OCI-LY7 (cell line): ENCODE measurements at regions of chr3 and their contacts with region 1.

Region 1: GRCh38 chr3:53170325-53171063 is 9.5 kb downstream of the PRKCD start:
- DNase-seq: peak; percentile 67
- H3K4me3 ChIP-seq: peak overlapping the region; percentile 53
- H3K27ac ChIP-seq: peak overlapping the region; percentile 94
- H3K4me1 ChIP-seq: peaks cover 100% of the 10 kb centered on the region
- CTCF ChIP-seq: no peak

Region 2: DNA sequence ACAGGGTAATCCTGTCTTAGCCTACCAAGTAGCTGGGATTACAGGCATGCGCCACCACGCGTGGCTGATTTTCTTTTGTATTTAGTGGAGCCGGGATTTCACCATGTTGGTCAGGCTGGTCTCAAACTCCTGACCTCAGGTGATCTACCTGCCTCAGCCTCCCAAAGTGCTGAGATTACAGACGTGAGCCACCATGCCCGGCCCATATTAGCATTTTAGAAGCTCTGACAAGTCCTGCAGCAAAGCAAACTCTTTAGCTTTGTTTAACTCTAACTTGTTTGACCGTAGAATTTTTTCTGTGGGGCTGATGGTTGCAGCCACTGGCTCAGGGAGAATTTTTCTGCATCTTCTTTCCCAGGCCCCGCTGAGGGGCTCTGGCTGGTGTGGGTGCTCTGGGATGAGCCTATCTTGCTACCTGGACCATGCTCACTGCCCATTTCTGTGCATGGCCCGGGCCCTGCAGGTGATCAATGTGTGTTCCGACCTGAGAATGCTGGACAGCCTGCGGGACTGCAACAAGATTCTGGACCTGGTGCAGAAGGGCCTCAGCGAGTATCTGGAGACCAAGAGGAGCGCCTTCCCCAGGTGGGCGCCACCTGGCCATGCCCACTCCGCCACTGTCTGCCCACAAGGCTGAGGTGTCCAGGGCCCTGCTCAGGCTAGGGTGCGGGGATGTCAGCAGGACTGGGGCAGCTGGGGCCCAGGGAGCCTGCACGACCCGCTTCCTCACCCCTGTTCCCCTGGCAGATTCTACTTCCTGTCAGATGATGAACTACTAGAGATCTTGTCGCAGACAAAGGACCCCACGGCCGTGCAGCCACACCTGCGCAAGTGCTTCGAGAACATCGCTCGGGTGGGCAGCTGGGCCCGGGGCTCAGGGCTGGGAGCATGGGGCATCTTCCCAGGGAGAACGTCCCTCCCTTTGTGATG is 813.1 kb before region 1 on chr3:
- CTCF ChIA-PET with region 1: no interaction called
- POLR2A ChIA-PET with region 1: no interaction called
- intact Hi-C with region 1: no loop called
- DNase-seq: no peak
- H3K4me3 ChIP-seq: no peak overlapping the region
- H3K27ac ChIP-seq: no peak overlapping the region
- H3K4me1 ChIP-seq: no peaks in the 10 kb centered on the region
- CTCF ChIP-seq: no peak

Region 3: DNA sequence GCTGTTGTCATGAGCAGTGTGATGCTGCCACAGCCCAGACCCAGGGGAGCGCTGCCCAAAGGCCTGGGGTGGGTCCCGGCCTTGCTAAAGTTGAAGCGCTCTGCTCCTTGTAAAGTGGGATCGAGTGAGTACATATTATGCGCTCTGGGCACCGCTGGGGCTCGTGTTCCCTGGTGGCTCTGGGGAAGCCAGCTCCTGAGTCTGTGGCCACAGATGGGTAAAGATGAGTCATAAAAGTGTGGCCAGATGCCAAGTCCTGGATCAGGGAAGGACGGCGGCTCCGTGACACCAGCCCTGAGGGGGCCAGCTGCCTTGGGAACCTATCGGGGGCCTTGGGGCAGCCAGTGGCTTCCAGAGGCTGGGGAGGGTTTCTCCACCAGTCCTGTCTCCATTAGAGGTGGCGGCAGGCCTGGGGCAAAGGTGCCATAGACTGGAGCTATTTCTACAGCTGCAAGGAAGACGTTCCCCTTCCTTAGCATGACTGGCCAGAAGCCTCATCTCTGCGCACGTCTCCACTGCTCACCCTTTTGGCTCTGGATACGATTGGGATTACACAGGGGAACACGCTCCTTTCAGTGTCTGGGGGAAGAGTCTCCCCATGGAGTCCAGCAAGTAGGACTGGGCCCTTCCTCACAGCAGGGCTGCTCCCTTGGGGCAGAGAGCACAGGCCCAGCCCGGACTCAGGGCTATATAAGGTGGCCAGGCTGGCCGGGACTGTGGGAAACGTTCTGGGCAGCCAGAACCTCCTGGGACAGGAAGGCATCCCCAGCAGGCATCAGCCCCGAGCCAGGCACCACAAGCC is 338.8 kb before region 1 on chr3:
- CTCF ChIA-PET with region 1: no interaction called
- POLR2A ChIA-PET with region 1: no interaction called
- intact Hi-C with region 1: no loop called
- DNase-seq: no peak
- H3K4me3 ChIP-seq: no peak overlapping the region
- H3K27ac ChIP-seq: no peak overlapping the region
- H3K4me1 ChIP-seq: no peaks in the 10 kb centered on the region
- CTCF ChIP-seq: no peak

Region 4: GRCh38 chr3:53130179-53131061 is 40.1 kb before region 1 on chr3 and contains the start of gene RFT1:
- CTCF ChIA-PET with region 1: interaction called, 3 read pairs
- POLR2A ChIA-PET with region 1: interaction called, 4 read pairs
- intact Hi-C with region 1: loop called (anchors 1 kb)
- DNase-seq: peak; percentile 97
- H3K4me3 ChIP-seq: peak within 1 kb of the TSS; percentile 96
- H3K27ac ChIP-seq: peak within 1 kb of the TSS; percentile 65
- H3K4me1 ChIP-seq: peaks cover 35% of the 10 kb centered on the region
- CTCF ChIP-seq: no peak
- total RNA-seq, gene RFT1: 9.9 and 15.8 TPM in 2 replicates

Region 5: DNA sequence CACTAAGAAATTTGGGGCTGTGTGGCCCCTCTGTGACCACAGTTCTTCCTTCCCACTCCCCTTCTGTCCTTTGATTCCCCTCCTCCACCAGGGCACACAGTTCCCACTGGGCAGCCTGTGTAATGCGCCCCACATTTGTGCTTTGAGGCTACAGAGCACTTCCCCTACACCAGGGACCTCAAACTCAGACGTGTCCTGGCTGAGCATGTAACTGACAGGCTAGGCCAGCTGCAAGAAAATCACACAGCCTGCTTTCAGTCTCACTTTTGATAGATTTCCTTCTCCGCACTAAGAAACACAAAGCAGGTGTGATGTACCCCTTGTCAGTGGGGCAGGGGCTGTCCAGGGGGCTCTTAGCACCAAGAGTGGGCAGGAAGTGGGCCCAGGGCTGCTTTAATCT is 20.2 kb after region 1 on chr3:
- CTCF ChIA-PET with region 1: interaction called, 11 read pairs
- POLR2A ChIA-PET with region 1: interaction called, 15 read pairs
- intact Hi-C with region 1: loop called (anchors 1 kb)
- DNase-seq: peak; percentile 80
- H3K4me3 ChIP-seq: no peak overlapping the region
- H3K27ac ChIP-seq: peak overlapping the region; percentile 92
- H3K4me1 ChIP-seq: peaks cover 77% of the 10 kb centered on the region
- CTCF ChIP-seq: no peak